Mammary epithelial cell (primary cell): ENCODE measurements at regions of chr1 and their contacts with region 1.

Region 1: GRCh38 chr1:181044449-181044966 is 10.7 kb downstream of the MR1 start:
- DNase-seq: peak; percentile 97
- H3K4me3 ChIP-seq: peak overlapping the region in 1 of 3 experiments; percentile 7
- H3K27ac ChIP-seq: peak overlapping the region; percentile 65
- H3K4me1 ChIP-seq: peaks cover 30% of the 10 kb centered on the region
- H3K27me3 ChIP-seq: no peaks in the 10 kb centered on the region
- CTCF ChIP-seq: no peak

Region 2: DNA sequence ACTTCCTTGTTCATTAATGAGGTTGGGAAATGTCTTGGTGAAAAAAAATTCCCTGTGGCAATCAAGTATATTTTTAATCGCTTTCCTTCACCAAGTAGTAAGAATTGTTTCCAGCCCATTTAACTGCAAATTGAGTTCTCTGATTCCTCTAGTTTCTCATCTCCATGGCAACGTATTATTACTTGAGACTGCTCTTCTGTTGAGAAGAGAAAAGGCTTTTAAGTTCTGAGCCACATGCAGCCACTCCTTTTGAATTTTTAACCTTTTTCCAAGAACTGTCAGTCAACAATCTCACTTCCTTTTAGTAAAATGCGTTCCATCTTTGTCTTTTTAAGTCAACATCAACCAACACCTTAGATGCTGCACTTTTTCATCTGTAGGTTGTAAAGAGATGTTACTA is 207.5 kb before region 1 on chr1:
- CTCF ChIA-PET with region 1: no interaction called
- dilution Hi-C with region 1: no loop called
- in situ Hi-C with region 1: no loop called
- intact Hi-C with region 1: no loop called
- DNase-seq: no peak
- H3K4me3 ChIP-seq: no peak overlapping the region
- H3K27ac ChIP-seq: no peak overlapping the region
- H3K4me1 ChIP-seq: no peaks in the 10 kb centered on the region
- H3K27me3 ChIP-seq: no peaks in the 10 kb centered on the region
- CTCF ChIP-seq: no peak

Region 3: DNA sequence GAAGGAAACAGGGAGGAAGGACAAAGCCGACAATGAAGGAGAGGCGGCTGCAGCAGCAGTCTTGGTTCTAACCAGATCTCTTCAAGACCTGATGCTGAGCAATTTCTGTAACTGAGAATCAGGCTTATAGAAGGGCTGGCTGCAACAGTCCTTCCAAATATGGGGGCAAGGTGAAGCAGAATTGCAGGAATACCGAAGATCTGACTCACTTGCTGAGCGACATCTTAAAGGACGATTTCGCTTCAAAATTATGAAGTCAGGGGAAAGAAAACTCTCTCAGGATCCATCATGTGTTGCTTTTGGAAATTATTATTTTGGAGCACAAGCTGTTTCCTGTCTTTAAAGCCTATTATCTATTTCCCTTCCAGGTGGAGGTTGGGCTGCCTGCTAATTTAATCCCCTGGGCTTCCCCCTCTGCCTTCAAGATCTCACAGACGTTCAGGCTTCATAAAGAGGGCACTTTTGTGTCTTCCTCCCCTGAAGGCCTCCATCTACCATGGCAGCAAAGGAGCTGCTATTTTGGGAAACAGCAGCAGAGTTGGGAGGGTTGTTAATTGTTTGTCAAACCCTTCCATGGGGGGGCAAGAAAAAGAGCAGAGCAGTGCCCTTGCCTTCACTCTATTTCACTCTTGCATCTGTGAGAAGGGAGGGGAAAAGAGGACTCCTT is 33.2 kb after region 1 on chr1:
- CTCF ChIA-PET with region 1: interaction called, 4 read pairs
- dilution Hi-C with region 1: no loop called
- in situ Hi-C with region 1: loop called in 1 of 2 experiments (anchors 5 kb)
- intact Hi-C with region 1: no loop called
- DNase-seq: no peak
- H3K4me3 ChIP-seq: no peak overlapping the region
- H3K27ac ChIP-seq: no peak overlapping the region
- H3K4me1 ChIP-seq: peaks cover 24% of the 10 kb centered on the region
- H3K27me3 ChIP-seq: no peaks in the 10 kb centered on the region
- CTCF ChIP-seq: no peak